GM12878 (cell line): ENCODE measurements at regions of chrX and their contacts with region 1.

Region 1: DNA sequence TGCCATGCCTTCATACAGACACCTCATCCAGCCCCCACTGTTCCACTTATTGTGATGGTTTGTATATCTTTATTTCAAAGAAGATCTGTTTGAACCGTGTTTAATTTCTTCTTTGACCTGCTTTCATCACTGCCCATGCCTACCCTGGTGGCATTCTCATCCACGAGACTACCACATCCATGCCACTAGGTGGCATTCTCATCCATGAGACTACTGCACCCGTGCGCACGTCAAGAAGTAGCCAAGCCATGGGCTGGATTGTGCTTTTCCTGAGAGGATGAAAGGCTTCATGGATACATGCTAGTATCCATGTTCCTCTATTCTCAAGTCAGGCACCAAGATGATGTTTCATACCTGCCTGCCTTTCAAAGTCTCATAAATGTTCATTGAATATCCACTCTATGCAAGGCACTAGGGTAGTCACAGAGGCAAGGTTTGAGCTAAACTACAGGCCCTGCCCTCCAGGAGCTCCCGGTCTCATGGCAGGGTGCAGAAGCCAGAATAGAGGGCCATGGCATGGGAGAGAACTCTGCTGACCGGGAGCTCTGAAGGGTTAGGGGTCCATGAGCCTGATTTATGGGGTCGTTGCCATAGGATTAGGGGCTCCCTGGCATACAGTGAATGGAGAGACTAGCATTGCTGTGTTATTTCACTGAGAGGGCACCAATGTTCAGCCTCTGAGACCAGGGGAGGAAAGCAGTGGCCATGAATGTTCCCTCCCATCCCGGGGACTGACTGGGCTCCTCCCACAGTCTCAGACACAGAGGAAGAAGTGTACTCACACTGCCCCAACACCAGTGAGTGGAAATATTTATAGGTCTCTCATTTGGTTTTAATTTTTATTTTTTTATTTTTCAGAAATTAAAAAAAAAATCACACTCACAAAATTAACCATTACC is 24.8 kb upstream of the EOLA2 start:
- DNase-seq: peak; percentile 5
- ATAC-seq: peak; percentile 98
- H3K4me3 ChIP-seq: no peak overlapping the region
- H3K27ac ChIP-seq: no peak overlapping the region
- H3K4me1 ChIP-seq: no peaks in the 10 kb centered on the region
- H3K27me3 ChIP-seq: no peaks in the 10 kb centered on the region
- CTCF ChIP-seq: peak; percentile 70 to 76 (median 71)
- EP300 ChIP-seq: no peak
- POLR2A ChIP-seq: no peak
- RAD21 ChIP-seq: peak; percentile 76

Region 2: GRCh38 chrX:149248073-149248625 is 715.0 kb before region 1 on chrX:
- CTCF ChIA-PET with region 1: no interaction called
- POLR2A ChIA-PET with region 1: no interaction called
- RAD21 ChIA-PET with region 1: no interaction called
- SMC1A ChIA-PET with region 1: no interaction called
- in situ Hi-C with region 1: no loop called
- intact Hi-C with region 1: no loop called
- DNase-seq: no peak
- ATAC-seq: no peak; the same call in 2 of the 3 replicates
- H3K4me3 ChIP-seq: no peak overlapping the region
- H3K27ac ChIP-seq: no peak overlapping the region
- H3K4me1 ChIP-seq: no peaks in the 10 kb centered on the region
- H3K27me3 ChIP-seq: no peaks in the 10 kb centered on the region
- CTCF ChIP-seq: no peak
- EP300 ChIP-seq: no peak
- POLR2A ChIP-seq: no peak
- RAD21 ChIP-seq: no peak

Region 3: DNA sequence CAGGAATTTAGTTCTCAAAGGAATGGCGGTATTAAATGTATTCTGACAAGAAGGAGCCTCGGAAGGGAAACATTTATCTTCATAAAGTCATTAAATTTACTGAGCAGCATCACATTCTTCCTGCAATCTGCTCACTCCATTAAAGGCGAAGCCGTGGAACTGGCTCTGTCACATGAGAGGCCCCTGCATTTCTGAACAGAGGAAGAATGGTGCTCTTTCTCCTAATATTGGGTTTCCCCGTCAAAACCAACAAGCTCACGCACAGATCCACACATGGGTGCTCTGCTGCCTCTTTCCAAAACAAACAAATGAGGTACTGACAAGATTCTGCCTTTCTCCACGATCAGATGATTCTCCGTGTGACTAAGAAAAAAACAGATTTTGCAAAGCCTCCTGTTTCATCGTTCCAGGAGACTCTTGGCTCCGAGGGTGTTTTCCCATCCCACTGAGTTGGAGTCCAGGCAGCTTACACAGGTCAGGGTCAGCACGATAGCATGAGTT is 649.2 kb before region 1 on chrX:
- CTCF ChIA-PET with region 1: no interaction called
- POLR2A ChIA-PET with region 1: no interaction called
- RAD21 ChIA-PET with region 1: no interaction called
- SMC1A ChIA-PET with region 1: no interaction called
- in situ Hi-C with region 1: no loop called
- intact Hi-C with region 1: no loop called
- DNase-seq: no peak
- ATAC-seq: no peak
- H3K4me3 ChIP-seq: no peak overlapping the region
- H3K27ac ChIP-seq: no peak overlapping the region
- H3K4me1 ChIP-seq: no peaks in the 10 kb centered on the region
- H3K27me3 ChIP-seq: no peaks in the 10 kb centered on the region
- CTCF ChIP-seq: no peak
- EP300 ChIP-seq: no peak
- POLR2A ChIP-seq: no peak
- RAD21 ChIP-seq: no peak

Region 4: GRCh38 chrX:149992918-149993317 is 29.8 kb after region 1 on chrX:
- CTCF ChIA-PET with region 1: no interaction called
- POLR2A ChIA-PET with region 1: no interaction called
- RAD21 ChIA-PET with region 1: no interaction called
- SMC1A ChIA-PET with region 1: no interaction called
- in situ Hi-C with region 1: no loop called
- intact Hi-C with region 1: no loop called
- DNase-seq: no peak
- ATAC-seq: no peak
- H3K4me3 ChIP-seq: no peak overlapping the region
- H3K27ac ChIP-seq: no peak overlapping the region
- H3K4me1 ChIP-seq: no peaks in the 10 kb centered on the region
- H3K27me3 ChIP-seq: no peaks in the 10 kb centered on the region
- CTCF ChIP-seq: no peak
- EP300 ChIP-seq: no peak
- POLR2A ChIP-seq: no peak
- RAD21 ChIP-seq: no peak

Region 5: DNA sequence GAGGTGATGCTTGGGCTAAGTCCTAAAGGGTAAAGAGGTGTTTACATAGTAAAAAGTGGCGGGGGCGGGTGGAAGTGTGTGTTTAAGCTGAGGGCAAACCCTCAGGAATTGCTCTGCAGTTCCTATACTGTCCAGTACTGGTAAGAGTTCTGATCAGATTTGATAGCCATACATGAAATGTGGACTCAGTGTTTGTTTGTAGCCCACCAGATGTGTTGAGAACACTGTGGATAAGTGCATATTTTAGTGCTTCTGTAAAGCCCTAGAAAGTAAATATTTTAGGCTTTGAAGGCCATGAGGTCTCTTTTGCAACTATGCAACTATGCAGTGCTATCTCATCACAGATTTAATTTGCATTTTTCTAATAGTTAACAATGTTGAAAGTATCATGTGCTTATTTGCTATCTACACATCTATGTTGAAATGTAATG is 55.8 kb after region 1 on chrX:
- CTCF ChIA-PET with region 1: no interaction called
- POLR2A ChIA-PET with region 1: no interaction called
- RAD21 ChIA-PET with region 1: no interaction called
- SMC1A ChIA-PET with region 1: no interaction called
- in situ Hi-C with region 1: no loop called
- intact Hi-C with region 1: no loop called
- DNase-seq: no peak
- ATAC-seq: no peak
- H3K4me3 ChIP-seq: no peak overlapping the region
- H3K27ac ChIP-seq: no peak overlapping the region
- H3K4me1 ChIP-seq: no peaks in the 10 kb centered on the region
- H3K27me3 ChIP-seq: no peaks in the 10 kb centered on the region
- CTCF ChIP-seq: no peak
- EP300 ChIP-seq: no peak
- POLR2A ChIP-seq: no peak
- RAD21 ChIP-seq: no peak

Region 6: DNA sequence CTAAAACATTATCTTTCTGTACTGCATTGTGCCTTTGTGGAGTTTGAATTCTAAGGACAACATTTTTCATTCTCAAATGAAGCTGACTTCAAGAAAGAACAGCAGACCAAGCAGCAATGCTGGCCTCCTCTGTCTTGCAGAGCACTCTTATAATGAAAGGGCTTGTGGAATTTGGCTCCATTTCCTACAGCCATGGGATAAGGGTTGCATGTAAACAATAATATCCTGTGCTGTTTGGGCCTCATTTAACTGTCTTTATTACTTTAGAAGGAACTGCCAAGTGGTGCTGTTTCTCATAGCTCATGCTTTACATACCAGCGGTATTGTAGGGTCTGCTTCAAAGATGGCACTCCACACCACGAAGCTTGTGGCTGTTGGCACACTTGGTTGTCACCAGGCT is 86.5 kb after region 1 on chrX:
- CTCF ChIA-PET with region 1: interaction called, 4 read pairs
- POLR2A ChIA-PET with region 1: no interaction called
- RAD21 ChIA-PET with region 1: interaction called, 3 read pairs
- SMC1A ChIA-PET with region 1: no interaction called
- in situ Hi-C with region 1: no loop called
- intact Hi-C with region 1: loop called (anchors 5 kb)
- DNase-seq: no peak
- ATAC-seq: no peak
- H3K4me3 ChIP-seq: no peak overlapping the region
- H3K27ac ChIP-seq: no peak overlapping the region
- H3K4me1 ChIP-seq: no peaks in the 10 kb centered on the region
- H3K27me3 ChIP-seq: no peaks in the 10 kb centered on the region; a peak in 1 of 4 replicates
- CTCF ChIP-seq: no peak
- EP300 ChIP-seq: no peak
- POLR2A ChIP-seq: no peak
- RAD21 ChIP-seq: no peak

Region 7: DNA sequence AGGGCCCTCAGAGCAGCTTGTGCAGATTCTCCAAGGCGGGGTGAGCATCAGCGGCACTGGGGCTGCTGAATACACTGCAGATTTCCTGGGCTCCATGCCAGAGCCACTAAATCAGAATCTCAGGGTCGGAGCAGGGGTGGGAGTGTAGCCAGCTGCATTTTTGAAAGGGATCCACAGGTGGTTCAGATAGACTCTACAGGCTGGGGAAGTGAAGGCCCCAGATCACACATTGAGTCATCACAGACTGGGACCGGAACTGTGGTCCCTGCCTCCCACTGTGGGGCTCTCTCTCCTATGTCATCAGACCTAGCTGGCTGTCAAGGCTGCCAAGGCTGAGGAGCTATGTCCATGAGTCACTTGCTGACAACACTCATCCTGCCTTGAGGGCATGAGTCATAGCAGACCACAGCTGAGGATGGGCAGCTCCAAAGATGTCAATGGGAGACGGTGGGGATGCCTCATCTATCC is 237.7 kb after region 1 on chrX:
- CTCF ChIA-PET with region 1: no interaction called
- POLR2A ChIA-PET with region 1: no interaction called
- RAD21 ChIA-PET with region 1: no interaction called
- SMC1A ChIA-PET with region 1: no interaction called
- in situ Hi-C with region 1: no loop called
- intact Hi-C with region 1: loop called (anchors 10 kb)
- DNase-seq: peak; percentile 54
- ATAC-seq: peak; percentile 93
- H3K4me3 ChIP-seq: no peak overlapping the region
- H3K27ac ChIP-seq: peak overlapping the region; percentile 11; the same call in 1 of the 2 replicates
- H3K4me1 ChIP-seq: peaks cover 12% of the 10 kb centered on the region
- H3K27me3 ChIP-seq: no peaks in the 10 kb centered on the region
- CTCF ChIP-seq: no peak
- EP300 ChIP-seq: peak in 1 of 2 experiments; percentile 46; a peak in 1 of 4 replicates
- POLR2A ChIP-seq: no peak
- RAD21 ChIP-seq: no peak

Region 8: GRCh38 chrX:150486011-150486410 is 522.9 kb after region 1 on chrX:
- CTCF ChIA-PET with region 1: interaction called, 6 read pairs
- POLR2A ChIA-PET with region 1: no interaction called
- RAD21 ChIA-PET with region 1: no interaction called
- SMC1A ChIA-PET with region 1: no interaction called
- in situ Hi-C with region 1: loop called (anchors 25 kb)
- intact Hi-C with region 1: loop called (anchors 2 kb)
- DNase-seq: no peak
- ATAC-seq: peak; percentile 86
- H3K4me3 ChIP-seq: no peak overlapping the region
- H3K27ac ChIP-seq: no peak overlapping the region
- H3K4me1 ChIP-seq: no peaks in the 10 kb centered on the region
- H3K27me3 ChIP-seq: no peaks in the 10 kb centered on the region; a peak in 1 of 4 replicates
- CTCF ChIP-seq: peak; percentile 46 to 65 (median 58)
- EP300 ChIP-seq: no peak
- POLR2A ChIP-seq: no peak
- RAD21 ChIP-seq: peak; percentile 48